Posterior vena cava (tissue), 2 donors: ENCODE measurements at regions of chr18 and their contacts with region 1.

Region 1: DNA sequence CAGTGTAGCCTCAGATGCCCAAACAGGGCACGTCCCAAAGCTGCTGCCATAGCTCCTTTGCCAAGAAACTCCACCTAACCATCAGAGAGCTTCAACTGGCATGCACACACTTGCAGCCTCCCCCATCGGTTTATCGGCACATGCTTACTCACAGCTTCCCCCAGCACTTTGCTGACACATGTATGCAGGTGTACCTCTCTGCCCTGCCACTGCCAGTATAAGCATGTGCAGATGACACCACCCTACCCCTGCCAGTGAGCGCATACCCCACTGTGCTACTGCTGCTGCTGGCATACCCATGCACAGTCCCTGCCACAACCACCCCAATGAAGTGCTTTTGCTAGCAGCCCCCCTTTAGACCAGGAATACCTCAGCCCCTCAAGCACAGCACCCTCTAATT is 1231.0 kb downstream of the DSC3 start:
- DNase-seq: no peak

Region 2: GRCh38 chr18:29862824-29863223 is 51.3 kb after region 1 on chr18:
- intact Hi-C with region 1: loop called in 1 of 2 experiments (anchors 10 kb)
- DNase-seq: no peak